WTC11 (cell line): ENCODE measurements at regions of chr11 and their contacts with region 1.

Region 1: DNA sequence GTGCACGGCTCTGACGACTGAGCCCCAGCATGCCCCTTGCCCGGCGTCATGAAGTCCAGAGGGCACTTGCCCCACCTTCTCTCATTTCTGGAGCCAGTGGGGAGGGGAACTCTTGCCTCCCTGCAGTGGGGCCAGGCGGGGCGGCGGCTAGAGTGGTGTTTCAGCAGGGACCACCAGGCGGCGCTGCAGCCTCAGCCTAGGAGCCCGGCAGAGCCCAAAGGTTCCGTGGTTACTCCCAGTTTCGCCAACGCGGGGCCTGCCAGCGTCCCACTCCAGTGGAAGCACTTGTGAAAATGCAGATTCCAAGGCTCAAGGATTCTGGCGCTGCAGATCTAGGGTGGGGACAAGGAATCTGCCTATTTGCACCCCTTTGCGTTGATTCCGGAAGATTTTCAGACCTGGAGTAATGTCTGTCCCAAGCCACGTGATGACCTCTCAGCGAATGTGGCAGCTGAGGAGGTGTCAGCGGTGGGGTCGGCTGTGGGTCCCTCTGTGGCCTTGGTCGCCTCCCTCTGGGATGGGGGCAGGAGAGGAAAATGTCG is 55.7 kb downstream of the CD82 start:
- DNase-seq: peak; percentile 91
- ATAC-seq: peak; percentile 75
- H3K4me3 Mint-ChIP-seq: peak overlapping the region; percentile 65
- H3K27ac Mint-ChIP-seq: no peak overlapping the region
- H3K4me1 Mint-ChIP-seq: peaks cover 35% of the 10 kb centered on the region; the same call in 1 of the 2 replicates
- H3K27me3 Mint-ChIP-seq: peaks cover 16% of the 10 kb centered on the region
- CTCF ChIP-seq: peak; percentile 99

Region 2: GRCh38 chr11:44483919-44484610 is 137.1 kb before region 1 on chr11:
- CTCF ChIA-PET with region 1: no interaction called
- POLR2A ChIA-PET with region 1: no interaction called
- DNase-seq: peak; percentile 31
- ATAC-seq: peak; percentile 46; the same call in 1 of the 2 replicates
- H3K4me3 Mint-ChIP-seq: no peak overlapping the region
- H3K27ac Mint-ChIP-seq: no peak overlapping the region
- H3K4me1 Mint-ChIP-seq: no peaks in the 10 kb centered on the region
- H3K27me3 Mint-ChIP-seq: peaks cover 4% of the 10 kb centered on the region
- CTCF ChIP-seq: no peak

Region 3: DNA sequence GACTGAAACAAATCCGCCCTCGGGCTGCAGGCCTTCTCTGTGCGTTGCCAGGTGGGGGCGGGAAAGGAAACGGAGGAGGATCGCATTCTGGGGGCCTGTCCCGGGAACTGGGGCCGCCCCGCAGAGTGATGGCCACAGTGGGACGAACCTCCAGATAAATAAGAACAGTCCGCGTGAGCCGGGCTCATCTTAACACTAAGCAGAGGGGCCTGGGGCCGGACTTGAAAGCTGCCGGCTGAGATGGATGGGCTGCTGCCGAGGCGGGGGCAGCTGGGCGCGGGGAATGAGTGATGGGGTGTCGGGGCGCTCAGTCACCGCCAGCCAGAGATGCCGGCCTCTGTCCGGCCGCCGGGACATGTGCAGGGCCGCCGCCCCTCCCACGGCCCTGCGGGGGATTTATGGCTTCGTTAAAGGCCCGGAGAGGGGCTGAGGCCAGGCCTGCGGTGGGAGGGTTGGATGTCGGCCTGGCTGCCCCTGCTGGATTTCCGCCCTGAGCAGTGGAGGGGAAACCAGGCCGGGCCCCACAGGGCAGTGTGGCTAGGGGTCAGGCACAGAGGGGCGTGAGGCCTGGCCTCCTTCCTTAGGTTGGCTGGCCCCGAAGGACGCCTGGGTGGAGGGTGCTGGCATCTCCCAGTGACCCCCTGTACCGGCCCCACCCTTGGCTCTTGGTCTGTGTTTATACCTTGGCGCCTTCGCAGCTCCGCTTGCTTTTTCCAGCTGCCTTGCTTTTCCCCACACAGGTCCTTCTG is 101.0 kb before region 1 on chr11:
- CTCF ChIA-PET with region 1: interaction called, 20 read pairs
- POLR2A ChIA-PET with region 1: no interaction called
- DNase-seq: no peak
- ATAC-seq: peak; percentile 38
- H3K4me3 Mint-ChIP-seq: no peak overlapping the region
- H3K27ac Mint-ChIP-seq: no peak overlapping the region
- H3K4me1 Mint-ChIP-seq: peaks cover 11% of the 10 kb centered on the region
- H3K27me3 Mint-ChIP-seq: peaks cover 4% of the 10 kb centered on the region; the same call in 1 of the 2 replicates
- CTCF ChIP-seq: no peak

Region 4: GRCh38 chr11:44572884-44573283 is 48.3 kb before region 1 on chr11:
- CTCF ChIA-PET with region 1: interaction called, 16 read pairs
- POLR2A ChIA-PET with region 1: no interaction called
- DNase-seq: peak; percentile 66
- ATAC-seq: peak; percentile 89
- H3K4me3 Mint-ChIP-seq: no peak overlapping the region
- H3K27ac Mint-ChIP-seq: no peak overlapping the region
- H3K4me1 Mint-ChIP-seq: peaks cover 26% of the 10 kb centered on the region
- H3K27me3 Mint-ChIP-seq: peaks cover 3% of the 10 kb centered on the region; the same call in 1 of the 2 replicates
- CTCF ChIP-seq: no peak

Region 5: DNA sequence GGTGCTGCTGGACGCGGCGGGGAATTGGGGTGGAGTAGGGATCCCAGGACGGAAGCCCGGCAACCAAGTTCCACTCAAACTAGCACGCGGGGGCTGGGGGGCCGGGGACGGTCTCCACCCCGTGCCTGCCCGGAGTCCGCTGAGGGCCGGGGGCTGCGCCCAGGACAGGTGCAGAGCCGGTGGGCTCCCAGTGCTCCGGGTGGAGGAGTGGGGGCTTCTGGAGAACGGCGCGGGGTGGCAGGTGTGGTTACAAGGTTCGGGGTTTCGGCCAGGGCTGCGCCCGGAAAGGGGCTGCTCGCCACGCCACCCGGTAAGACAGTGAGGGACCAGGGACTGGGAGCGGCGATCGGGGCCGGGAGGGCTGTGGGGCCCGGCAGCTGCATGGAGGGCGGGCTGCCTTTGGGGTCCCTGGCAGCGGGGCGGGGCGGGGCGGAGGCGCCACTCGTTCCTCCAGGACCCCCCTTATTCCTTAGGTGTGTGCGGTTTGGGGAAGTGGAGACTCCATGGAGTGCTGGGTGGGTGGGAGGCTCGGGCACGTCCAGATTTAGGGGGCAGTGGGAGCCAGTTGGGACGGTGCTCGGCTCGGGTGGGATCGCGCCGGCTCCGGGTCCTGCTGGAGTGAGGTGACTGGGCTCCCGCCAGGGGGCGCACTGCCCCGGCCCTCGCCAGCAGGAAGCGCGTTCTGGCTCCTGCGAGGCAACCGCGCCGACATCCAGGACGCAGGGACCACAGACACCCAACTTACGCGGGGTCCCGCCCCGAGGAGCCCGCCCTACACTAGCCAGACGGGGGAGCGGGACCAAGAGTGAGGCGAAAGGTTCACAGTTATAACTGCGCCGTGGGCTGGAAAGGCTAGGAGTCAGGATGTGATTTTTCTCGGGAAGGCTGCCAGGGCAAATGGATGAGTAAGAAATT is 106.4 kb after region 1 on chr11:
- CTCF ChIA-PET with region 1: interaction called, 15 read pairs
- POLR2A ChIA-PET with region 1: interaction called, 3 read pairs
- DNase-seq: peak; percentile 86
- ATAC-seq: peak; percentile 58
- H3K4me3 Mint-ChIP-seq: peak overlapping the region; percentile 78
- H3K27ac Mint-ChIP-seq: no peak overlapping the region
- H3K4me1 Mint-ChIP-seq: peaks cover 57% of the 10 kb centered on the region
- H3K27me3 Mint-ChIP-seq: peaks cover 75% of the 10 kb centered on the region
- CTCF ChIP-seq: peak; percentile 97

Region 6: GRCh38 chr11:44775366-44775984 is 154.3 kb after region 1 on chr11:
- CTCF ChIA-PET with region 1: interaction called, 36 read pairs
- POLR2A ChIA-PET with region 1: no interaction called
- DNase-seq: peak; percentile 78
- ATAC-seq: peak; percentile 76
- H3K4me3 Mint-ChIP-seq: no peak overlapping the region
- H3K27ac Mint-ChIP-seq: peak overlapping the region; percentile 30; the same call in 1 of the 2 replicates
- H3K4me1 Mint-ChIP-seq: peaks cover 71% of the 10 kb centered on the region
- H3K27me3 Mint-ChIP-seq: no peaks in the 10 kb centered on the region; the same call in 1 of the 2 replicates
- CTCF ChIP-seq: peak; percentile 82

Region 7: DNA sequence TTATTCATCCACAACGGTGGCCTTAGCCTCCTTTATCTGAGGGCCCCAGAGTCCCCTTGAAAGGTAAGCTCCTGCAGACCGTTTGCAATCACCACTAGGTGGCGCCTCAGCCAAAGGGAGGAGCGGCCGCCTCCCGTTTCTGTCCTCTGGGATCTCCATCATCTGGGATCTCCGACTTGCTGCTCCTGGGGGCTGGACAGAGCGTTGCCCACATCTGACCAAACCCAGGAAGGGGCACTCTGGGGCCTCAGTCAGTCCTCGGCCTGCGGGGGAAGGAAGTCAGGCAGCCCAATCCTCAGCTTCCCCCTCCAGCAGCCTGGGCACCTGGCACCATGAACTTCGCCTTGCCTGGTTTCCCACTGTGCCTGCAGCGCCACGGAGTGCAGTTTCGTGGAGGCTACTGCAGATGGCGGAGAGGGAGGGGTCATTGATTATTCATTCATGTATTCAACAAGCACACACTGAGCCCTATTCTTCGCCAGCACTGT is 306.0 kb after region 1 on chr11:
- CTCF ChIA-PET with region 1: interaction called, 28 read pairs
- POLR2A ChIA-PET with region 1: no interaction called
- DNase-seq: peak; percentile 89
- ATAC-seq: peak; percentile 68
- H3K4me3 Mint-ChIP-seq: no peak overlapping the region
- H3K27ac Mint-ChIP-seq: no peak overlapping the region; the same call in 1 of the 2 replicates
- H3K4me1 Mint-ChIP-seq: peaks cover 28% of the 10 kb centered on the region
- H3K27me3 Mint-ChIP-seq: no peaks in the 10 kb centered on the region; the same call in 1 of the 2 replicates
- CTCF ChIP-seq: peak; percentile 86

Region 8: GRCh38 chr11:45383224-45383623 is 762.0 kb after region 1 on chr11:
- CTCF ChIA-PET with region 1: no interaction called
- POLR2A ChIA-PET with region 1: no interaction called
- DNase-seq: no peak
- ATAC-seq: no peak
- H3K4me3 Mint-ChIP-seq: no peak overlapping the region
- H3K27ac Mint-ChIP-seq: no peak overlapping the region
- H3K4me1 Mint-ChIP-seq: peaks cover 12% of the 10 kb centered on the region
- H3K27me3 Mint-ChIP-seq: peaks cover 7% of the 10 kb centered on the region
- CTCF ChIP-seq: no peak